Panc1 (cell line): ENCODE measurements at regions of chr4 and their contacts with region 1.

Region 1: GRCh38 chr4:139470997-139471665 is 17.2 kb downstream of the RAB33B start:
- DNase-seq: no peak
- ATAC-seq: no peak
- H3K4me3 ChIP-seq: no peak overlapping the region
- H3K27ac ChIP-seq: no peak overlapping the region
- H3K4me1 ChIP-seq: no peaks in the 10 kb centered on the region
- H3K27me3 ChIP-seq: no peaks in the 10 kb centered on the region
- CTCF ChIP-seq: no peak

Region 2: DNA sequence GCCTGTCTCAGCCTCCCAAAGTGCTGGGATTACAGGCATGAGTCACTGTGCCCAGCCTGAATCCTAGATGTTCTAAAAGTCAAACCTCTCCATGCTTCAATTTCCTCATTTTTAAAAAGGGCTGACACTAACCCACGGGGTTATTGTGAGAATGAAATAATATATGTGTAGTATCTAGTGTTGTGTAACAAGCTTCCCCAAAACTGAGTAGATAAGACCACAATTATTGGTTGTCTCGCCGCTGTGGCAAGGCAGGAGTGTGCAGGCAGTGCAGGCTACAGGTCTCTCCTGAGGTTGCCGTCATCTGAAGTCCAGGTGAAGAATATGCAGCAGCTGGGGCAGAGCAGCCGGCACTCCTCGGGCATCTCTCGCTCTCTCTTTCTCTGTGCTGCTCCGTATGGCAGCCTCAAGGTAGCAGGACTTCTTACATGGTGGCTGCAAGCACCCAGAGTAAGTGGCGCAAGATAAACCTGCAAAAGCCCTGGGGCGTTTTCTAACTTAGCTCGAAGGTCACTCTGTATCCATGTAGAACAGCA is 13.7 kb after region 1 on chr4:
- CTCF ChIA-PET with region 1: no interaction called
- POLR2A ChIA-PET with region 1: interaction called, 19 read pairs
- in situ Hi-C with region 1: no loop called
- intact Hi-C with region 1: no loop called
- DNase-seq: no peak
- ATAC-seq: peak; percentile 71
- H3K4me3 ChIP-seq: peak overlapping the region in 1 of 2 experiments; percentile 18; a peak in 2 of 4 replicates
- H3K27ac ChIP-seq: no peak overlapping the region
- H3K4me1 ChIP-seq: no peaks in the 10 kb centered on the region
- H3K27me3 ChIP-seq: no peaks in the 10 kb centered on the region
- CTCF ChIP-seq: no peak